ENCODE measurements at regions of chr14 and their contacts with region 1.

Region 1: DNA sequence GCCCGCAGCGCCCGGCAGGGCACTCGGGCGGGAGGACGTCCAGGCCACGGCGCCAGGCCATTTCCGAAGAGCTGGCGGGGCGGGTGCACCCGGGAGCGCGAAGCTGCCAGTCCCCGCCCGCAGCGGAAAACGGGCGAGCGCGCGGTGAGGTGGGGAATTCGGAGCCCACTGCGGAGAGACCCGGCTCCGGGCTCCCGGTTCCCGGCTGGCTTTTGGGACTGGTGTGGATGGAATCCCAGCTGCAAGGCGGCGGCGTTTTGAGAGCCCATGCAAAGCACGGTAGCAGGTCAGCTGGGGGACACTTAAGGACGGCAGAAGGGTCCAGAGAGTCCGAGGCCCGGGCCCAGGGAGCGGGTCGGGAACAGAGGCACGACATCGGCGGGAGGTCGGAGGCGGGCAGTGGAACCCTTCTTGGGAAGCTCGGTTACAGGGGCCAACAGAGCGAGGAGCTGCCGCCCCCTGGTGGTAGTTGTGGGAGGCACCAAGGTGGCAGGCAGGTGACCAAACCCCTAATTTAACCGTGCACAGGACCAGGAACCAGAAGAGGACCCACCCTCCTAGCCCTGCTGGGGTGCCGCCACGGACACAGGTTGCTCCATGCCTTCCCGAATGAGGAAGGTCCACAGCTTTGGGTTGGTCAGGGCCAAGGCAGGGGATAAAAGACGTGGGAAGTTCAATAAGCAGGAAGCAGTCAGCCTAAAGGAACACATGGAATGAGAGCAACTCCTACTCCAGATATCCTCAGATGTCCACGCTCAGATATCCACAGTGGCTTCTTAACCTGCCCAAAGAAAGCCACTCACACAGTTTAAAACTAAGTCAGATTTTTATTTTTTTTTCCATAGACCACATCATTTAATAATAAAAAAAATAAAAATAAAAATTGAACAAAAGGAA is 685 bp upstream of the CDH24 start:
- DNase-seq: peak; percentile 90
- CTCF ChIP-seq: peak; percentile 96

Region 2: GRCh38 chr14:22973217-22974032 is 84.6 kb before region 1 on chr14:
- CTCF ChIA-PET with region 1: interaction called, 79 read pairs
- POLR2A ChIA-PET with region 1: no interaction called
- DNase-seq: peak; percentile 63
- CTCF ChIP-seq: peak; percentile 80

Region 3: GRCh38 chr14:23006544-23007419 is 51.2 kb before region 1 on chr14:
- CTCF ChIA-PET with region 1: interaction called, 27 read pairs
- POLR2A ChIA-PET with region 1: no interaction called
- DNase-seq: peak; percentile 97
- CTCF ChIP-seq: no peak

Region 4: DNA sequence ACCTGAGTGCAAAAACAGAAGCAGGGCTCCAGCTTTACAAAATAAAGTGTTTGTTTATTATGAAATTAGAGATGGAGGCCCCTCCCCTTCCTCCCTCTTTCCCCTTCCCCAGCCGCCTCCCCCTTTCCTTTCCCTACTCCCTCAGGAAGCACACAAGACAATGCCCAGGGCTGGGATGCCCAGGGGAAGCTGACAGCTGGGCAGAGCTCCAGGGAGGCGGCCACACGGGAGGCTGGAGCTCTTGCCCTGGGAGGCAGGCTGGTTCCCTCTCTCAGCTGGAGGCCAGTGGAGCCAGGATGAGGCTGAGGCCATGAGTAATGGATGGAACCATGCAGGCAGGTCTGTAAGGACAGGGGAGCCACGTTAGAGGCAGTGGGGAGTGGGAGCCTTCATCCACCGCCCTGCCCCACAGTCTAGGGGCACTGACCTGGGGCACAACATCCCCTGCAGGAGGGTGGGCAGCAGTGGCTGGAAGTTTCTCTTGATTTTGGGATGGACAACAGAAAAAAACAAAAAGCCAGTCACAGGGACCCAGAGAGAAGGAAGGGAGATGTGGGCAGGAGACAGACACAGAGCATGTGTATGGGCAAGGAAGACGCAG is 10.9 kb before region 1 on chr14:
- CTCF ChIA-PET with region 1: interaction called, 106 read pairs
- POLR2A ChIA-PET with region 1: no interaction called
- DNase-seq: no peak
- CTCF ChIP-seq: no peak

Region 5: GRCh38 chr14:23095196-23096108 is 37.4 kb after region 1 on chr14 and contains the start of gene C14orf119:
- CTCF ChIA-PET with region 1: interaction called, 14 read pairs
- POLR2A ChIA-PET with region 1: interaction called, 4 read pairs
- DNase-seq: peak; percentile 99
- CTCF ChIP-seq: no peak

Measured in GM10248 (cell line).